ENCODE measurements at regions of chr3 and their contacts with region 1.

Region 1: DNA sequence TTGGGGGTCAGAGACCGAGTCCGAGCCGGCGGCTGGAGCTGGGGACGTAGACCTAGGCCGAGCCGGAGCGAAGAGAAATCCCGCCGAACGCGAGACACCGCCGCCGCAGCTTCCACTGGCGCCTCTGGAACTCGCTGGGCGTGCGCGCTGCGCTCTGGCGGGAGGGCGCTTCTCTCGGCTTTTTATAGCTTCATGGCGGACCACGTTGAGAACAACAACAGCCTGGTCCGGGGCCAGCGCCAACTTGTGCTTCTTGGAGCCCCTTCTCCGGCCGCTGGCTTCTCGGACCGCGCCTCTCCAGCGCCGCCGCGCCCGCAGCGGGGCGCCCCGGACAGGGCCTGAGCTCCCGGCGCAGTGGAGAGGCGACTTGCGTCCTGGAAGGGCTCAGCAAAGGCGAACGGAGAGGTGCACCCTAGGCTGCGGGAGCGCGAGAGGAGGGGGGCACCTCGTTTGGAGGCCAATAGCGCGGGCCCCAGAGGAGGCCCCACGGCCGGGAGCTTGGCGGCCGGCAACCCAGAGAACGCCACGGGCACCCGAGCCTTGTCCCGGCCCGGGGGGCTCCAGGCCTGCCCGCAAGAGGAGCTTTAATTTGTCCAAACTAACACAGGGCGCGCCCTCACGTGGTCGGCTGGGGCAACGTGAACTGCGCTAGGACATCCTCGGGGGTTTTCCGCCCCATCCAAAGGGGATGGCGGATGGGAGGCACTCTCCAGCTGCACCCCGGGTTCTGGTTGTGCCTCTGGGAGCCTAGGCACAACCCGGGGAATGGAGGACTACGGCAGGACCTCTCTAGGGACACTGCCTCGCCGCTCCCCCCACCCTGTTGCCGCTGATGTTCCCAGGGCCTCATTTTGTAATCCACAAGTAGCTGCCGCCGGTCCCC is 37.7 kb downstream of the HMCES start:
- DNase-seq: peak; percentile 75 to 83
- ATAC-seq: peak; percentile 70 to 72
- H3K4me3 ChIP-seq: peak overlapping the region; percentile 76 to 93 (median 89)
- H3K27ac ChIP-seq: peak overlapping the region; percentile 96 to 99 (median 98)
- H3K4me1 ChIP-seq: peaks cover 18 to 25% of the 10 kb centered on the region in 2 donors
- H3K27me3 ChIP-seq: no peaks in the 10 kb centered on the region
- CTCF ChIP-seq: peak; percentile 25 to 62 (median 44)
- POLR2A ChIP-seq: peak; percentile 99 to 100

Region 2: DNA sequence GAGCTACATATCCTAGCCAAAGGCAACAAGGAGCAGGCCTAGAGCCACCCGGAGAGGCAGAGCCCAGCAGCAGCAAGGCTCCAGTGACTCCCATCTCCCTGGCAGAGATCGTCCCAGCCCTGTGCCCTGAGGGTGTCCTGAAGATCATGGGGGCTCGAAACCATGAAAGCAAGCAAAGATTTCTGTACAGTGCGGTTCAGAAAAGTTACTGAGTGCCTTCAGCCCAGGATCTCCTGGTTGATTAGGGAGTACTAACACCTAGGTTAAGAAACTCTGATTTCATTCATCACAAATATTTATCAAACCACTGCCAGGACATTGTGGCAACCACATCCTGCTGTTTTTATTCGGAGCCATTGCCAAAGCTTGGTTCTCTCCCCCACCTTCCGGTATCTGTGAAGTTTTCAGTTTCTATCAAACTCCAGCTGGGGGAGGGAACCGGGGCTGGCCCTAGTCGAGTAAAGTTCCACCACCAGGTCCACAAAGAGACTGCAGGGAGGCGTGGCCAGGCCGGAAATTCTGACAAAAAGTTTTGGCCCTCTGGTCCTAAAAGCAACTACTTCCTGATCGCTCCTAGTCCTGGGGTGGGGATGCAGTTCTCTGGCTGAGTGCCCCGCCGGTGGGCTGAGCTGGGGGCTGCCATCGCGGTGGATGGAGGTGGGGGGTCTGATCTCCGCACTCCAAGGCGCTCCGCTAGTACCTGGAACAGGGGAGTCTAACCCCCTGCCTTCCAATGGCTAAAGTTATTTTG is 195.9 kb before region 1 on chr3:
- in situ Hi-C with region 1: no loop called
- intact Hi-C with region 1: loop called (anchors 5 kb)
- DNase-seq: peak; percentile 58 to 70
- ATAC-seq: peak; percentile 40 to 45
- H3K4me3 ChIP-seq: peak overlapping the region; percentile 74 to 85 (median 80)
- H3K27ac ChIP-seq: peak overlapping the region; percentile 87 to 92 (median 90)
- H3K4me1 ChIP-seq: peaks cover 15 to 19% of the 10 kb centered on the region in 2 donors
- H3K27me3 ChIP-seq: no peaks in the 10 kb centered on the region
- CTCF ChIP-seq: peak in 4 of 5 experiments; percentile 11 to 33 (median 28)
- POLR2A ChIP-seq: peak; percentile 33 to 66

Region 3: DNA sequence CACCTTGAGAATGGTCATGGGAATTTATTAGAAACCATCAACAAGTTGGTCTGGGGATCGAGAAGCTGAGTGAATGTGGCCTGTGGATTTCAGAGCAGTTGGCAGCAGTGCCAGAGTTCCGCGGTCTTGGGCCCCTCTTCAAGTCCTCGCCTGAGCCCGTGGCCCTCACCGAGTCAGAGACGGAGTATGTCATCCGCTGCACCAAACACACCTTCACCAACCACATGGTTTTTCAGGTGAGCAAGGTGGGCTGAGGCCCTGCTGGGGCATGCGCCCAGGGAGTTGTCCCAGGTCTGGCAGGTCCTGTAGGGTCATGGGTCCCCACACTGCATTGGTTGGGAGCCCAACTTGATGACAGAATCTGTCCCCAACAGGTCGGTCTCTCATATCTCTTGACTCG is 44.7 kb before region 1 on chr3:
- in situ Hi-C with region 1: loop called in 1 of 4 experiments (anchors 5 kb)
- intact Hi-C with region 1: no loop called
- DNase-seq: no peak
- ATAC-seq: no peak
- H3K4me3 ChIP-seq: no peak overlapping the region
- H3K27ac ChIP-seq: no peak overlapping the region
- H3K4me1 ChIP-seq: no peaks in the 10 kb centered on the region
- H3K27me3 ChIP-seq: no peaks in the 10 kb centered on the region
- CTCF ChIP-seq: no peak
- POLR2A ChIP-seq: no peak

Region 4: DNA sequence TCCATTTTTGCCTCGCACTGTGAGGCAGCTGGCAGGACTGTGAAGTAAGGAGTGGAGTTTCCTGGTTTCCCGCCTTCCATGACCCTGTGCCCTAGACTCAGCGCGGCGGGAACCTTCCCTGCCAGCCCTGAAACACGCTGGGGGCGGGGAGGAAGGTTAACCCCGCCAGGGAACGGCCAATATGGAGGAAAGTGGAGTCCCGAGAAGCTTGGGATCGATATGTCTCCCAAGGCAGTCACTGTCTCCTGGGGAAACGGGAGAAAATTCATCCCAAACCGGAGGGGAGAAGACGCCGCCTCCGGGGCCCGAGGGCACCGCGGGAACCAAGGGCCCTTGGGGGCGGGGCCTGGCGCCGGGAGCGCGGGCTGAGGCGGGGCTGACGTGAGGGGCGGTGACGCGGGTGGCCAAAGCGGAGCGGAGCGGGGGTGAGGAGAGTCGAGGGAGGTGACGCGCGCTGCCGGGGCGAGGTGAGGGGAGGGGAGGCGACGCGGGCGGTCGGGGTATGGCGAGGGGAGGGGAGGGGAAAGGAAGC is 37.9 kb before region 1 on chr3 and contains the start of gene HMCES:
- in situ Hi-C with region 1: loop called in 1 of 4 experiments (anchors 5 kb)
- intact Hi-C with region 1: loop called (anchors 1 kb)
- DNase-seq: peak; percentile 88 to 90
- ATAC-seq: peak; percentile 92 to 95
- H3K4me3 ChIP-seq: peak within 1 kb of the TSS; percentile 69 to 91 (median 86)
- H3K27ac ChIP-seq: peak within 1 kb of the TSS; percentile 87 to 94 (median 89)
- H3K4me1 ChIP-seq: peaks cover 19 to 21% of the 10 kb centered on the region in 2 donors
- H3K27me3 ChIP-seq: no peaks in the 10 kb centered on the region
- CTCF ChIP-seq: no peak
- POLR2A ChIP-seq: peak in 1 of 2 donors; percentile 83
- total RNA-seq, gene HMCES: 24.7 to 35.2 (median 29.5) TPM

Region 5: DNA sequence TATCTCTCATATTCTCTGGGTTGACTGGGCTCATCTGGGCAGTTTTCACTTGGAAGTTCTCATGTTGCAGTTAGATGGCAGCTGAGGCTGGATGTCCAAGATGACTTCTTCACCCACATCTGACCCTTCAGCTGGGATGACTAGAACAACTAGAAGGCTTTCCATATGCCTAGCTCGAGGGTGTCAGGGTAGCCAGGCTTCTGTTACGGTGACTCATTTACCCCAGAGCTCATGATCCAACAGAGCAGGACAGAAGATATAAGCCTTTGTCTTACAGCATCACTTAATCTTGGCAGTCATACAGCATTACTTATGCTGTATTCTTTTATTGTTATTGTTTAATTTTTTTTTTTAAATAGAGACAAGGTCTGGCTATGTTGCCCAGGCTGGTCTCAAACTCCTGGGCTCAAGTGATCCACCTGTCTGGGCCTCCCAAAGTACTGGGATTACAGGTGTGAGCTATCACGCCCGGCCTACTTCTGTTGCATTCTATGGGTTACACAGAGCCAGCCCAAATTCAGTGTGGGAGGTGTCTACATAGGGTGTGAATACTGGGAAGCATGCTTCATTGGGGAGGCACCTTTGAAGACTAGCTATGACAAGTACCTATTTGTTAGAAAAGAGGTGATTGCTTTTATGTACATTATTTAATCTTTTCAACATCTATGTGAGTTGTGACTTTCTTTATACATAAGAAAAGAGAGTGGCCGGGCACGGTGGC is 27.0 kb before region 1 on chr3:
- in situ Hi-C with region 1: no loop called
- intact Hi-C with region 1: no loop called
- DNase-seq: no peak
- ATAC-seq: peak in 1 of 2 donors; percentile 44
- H3K4me3 ChIP-seq: no peak overlapping the region
- H3K27ac ChIP-seq: no peak overlapping the region
- H3K4me1 ChIP-seq: no peaks in the 10 kb centered on the region
- H3K27me3 ChIP-seq: no peaks in the 10 kb centered on the region
- CTCF ChIP-seq: no peak
- POLR2A ChIP-seq: no peak

Region 6: GRCh38 chr3:129399145-129399894 is 82.9 kb after region 1 on chr3:
- in situ Hi-C with region 1: no loop called
- intact Hi-C with region 1: no loop called
- DNase-seq: peak; percentile 75 to 80
- ATAC-seq: peak; percentile 99
- H3K4me3 ChIP-seq: peak overlapping the region; percentile 79 to 98 (median 86)
- H3K27ac ChIP-seq: peak overlapping the region; percentile 84 to 93 (median 88)
- H3K4me1 ChIP-seq: peaks cover 10 to 14% of the 10 kb centered on the region in 2 donors
- H3K27me3 ChIP-seq: no peaks in the 10 kb centered on the region
- CTCF ChIP-seq: peak; percentile 62 to 85 (median 82)
- POLR2A ChIP-seq: no peak

Region 7: GRCh38 chr3:129439817-129440617 is 123.6 kb after region 1 on chr3 and contains the starts of genes IFT122 and MBD4:
- in situ Hi-C with region 1: no loop called
- intact Hi-C with region 1: loop called (anchors 5 kb)
- DNase-seq: peak; percentile 96 to 98
- ATAC-seq: peak; percentile 93 to 96
- H3K4me3 ChIP-seq: peak within 1 kb of the TSS; percentile 68 to 89 (median 76)
- H3K27ac ChIP-seq: peak within 1 kb of the TSS; percentile 81 to 92 (median 85)
- H3K4me1 ChIP-seq: peaks cover 28 to 31% of the 10 kb centered on the region in 2 donors
- H3K27me3 ChIP-seq: no peaks in the 10 kb centered on the region
- CTCF ChIP-seq: peak in 1 of 5 experiments; percentile 4
- POLR2A ChIP-seq: peak; percentile 63 to 88
- total RNA-seq, gene IFT122: 4.6 to 16.4 (median 5.9) TPM
- total RNA-seq, gene MBD4: 15.4 to 18.1 (median 16.4) TPM

Region 8: DNA sequence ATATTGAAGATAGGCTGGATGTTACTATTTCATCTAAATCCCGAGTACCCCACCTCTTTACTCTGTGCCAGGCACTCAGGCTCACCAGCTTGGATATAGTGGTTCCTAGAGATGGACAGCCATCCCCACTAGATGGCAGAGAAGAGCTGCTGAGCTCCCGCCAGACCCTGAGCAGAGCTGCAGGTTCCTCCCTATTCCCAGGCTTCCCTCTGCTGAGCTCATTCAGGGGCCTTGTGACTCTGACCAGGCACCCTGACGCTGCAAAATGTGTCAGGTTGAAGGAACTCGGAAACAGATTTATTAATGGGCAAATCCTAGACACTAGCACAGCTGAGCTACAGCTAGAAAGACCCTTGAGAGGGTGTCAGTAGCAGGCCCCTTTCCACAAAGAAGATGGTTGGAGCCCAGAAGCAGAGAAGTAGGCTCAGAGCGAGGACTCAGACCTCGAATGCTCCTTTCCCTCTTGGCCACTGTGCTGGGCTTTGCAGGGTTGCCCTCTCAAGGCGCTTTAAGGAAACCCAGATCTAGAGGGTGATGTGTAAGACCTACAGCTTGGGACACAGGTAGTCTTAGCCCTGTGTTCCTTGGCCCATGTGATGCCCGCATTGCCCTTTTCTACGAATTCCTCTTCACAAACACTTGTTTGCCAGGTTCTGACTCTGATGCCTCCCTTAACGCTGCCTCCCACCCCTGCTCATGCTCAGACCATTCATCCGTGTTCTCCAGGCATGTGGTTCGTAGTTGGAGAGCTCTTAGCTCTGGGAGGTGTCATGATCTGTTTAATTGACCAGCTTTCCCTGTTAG is 174.1 kb after region 1 on chr3:
- in situ Hi-C with region 1: no loop called
- intact Hi-C with region 1: no loop called
- DNase-seq: peak; percentile 84 to 86
- ATAC-seq: peak; percentile 64 to 75
- H3K4me3 ChIP-seq: no peak overlapping the region
- H3K27ac ChIP-seq: peak overlapping the region; percentile 71 to 84 (median 78)
- H3K4me1 ChIP-seq: peaks cover 39 to 47% of the 10 kb centered on the region in 2 donors
- H3K27me3 ChIP-seq: no peaks in the 10 kb centered on the region
- CTCF ChIP-seq: peak; percentile 81 to 91 (median 88)
- POLR2A ChIP-seq: no peak

Measured in gastrocnemius medialis (tissue), 4 donors.